ENCODE measurements at regions of chr7 and their contacts with region 1.

Region 1: GRCh38 chr7:81618396-81619014 is 151.3 kb downstream of the HGF start:
- DNase-seq: no peak
- ATAC-seq: no peak
- H3K4me3 ChIP-seq: no peak overlapping the region
- H3K27ac ChIP-seq: no peak overlapping the region
- H3K4me1 ChIP-seq: no peaks in the 10 kb centered on the region
- H3K27me3 ChIP-seq: no peaks in the 10 kb centered on the region

Region 2: GRCh38 chr7:81482600-81483186 is 135.8 kb before region 1 on chr7:
- intact Hi-C with region 1: no loop called
- DNase-seq: no peak
- ATAC-seq: peak; percentile 72
- H3K4me3 ChIP-seq: no peak overlapping the region
- H3K27ac ChIP-seq: no peak overlapping the region
- H3K4me1 ChIP-seq: peaks cover 0 to 3% of the 10 kb centered on the region in 2 donors
- H3K27me3 ChIP-seq: no peaks in the 10 kb centered on the region

Region 3: DNA sequence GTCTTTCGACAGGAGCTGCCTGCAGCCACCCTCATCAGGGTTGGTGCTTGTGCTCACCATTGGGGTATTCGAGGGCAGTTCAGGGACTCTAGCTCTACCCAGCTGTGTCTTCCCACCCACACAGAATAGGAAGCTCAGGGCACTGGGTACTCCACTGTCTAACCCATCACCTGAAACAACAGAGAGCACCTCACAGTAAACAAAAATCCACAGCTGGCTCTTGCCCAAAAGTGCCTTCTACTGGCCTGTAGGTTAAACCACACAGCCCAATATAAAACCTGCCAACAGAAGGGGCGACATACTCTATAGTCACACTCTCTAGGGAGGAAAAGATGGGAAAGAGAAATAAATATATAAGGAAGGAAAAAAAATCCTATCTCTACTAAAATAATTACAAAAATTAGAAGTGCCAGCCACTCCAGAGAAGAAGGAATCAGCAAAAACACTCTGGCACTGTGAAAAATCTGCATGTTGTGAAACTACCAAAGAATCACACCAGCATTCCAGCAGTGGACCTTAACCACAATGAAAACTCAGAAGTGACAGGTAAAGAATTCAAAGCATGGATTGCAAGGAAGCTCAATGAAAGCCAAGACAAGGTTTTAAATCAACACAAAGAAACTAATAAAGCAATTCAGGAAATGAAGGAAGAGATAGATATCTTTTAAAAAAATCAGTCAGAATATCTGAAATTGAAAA is 41.3 kb after region 1 on chr7:
- intact Hi-C with region 1: loop called in 1 of 2 experiments (anchors 5 kb)
- DNase-seq: no peak
- ATAC-seq: no peak
- H3K4me3 ChIP-seq: no peak overlapping the region
- H3K27ac ChIP-seq: no peak overlapping the region
- H3K4me1 ChIP-seq: peaks cover 3 to 6% of the 10 kb centered on the region in 2 donors
- H3K27me3 ChIP-seq: no peaks in the 10 kb centered on the region

Region 4: GRCh38 chr7:82036146-82036886 is 417.8 kb after region 1 on chr7:
- intact Hi-C with region 1: no loop called
- DNase-seq: no peak
- ATAC-seq: no peak
- H3K4me3 ChIP-seq: no peak overlapping the region
- H3K27ac ChIP-seq: no peak overlapping the region
- H3K4me1 ChIP-seq: no peaks in the 10 kb centered on the region
- H3K27me3 ChIP-seq: no peaks in the 10 kb centered on the region

Measured in aorta (tissue), 5 donors.